ENCODE measurements at regions of chr3 and their contacts with region 1.

Region 1: DNA sequence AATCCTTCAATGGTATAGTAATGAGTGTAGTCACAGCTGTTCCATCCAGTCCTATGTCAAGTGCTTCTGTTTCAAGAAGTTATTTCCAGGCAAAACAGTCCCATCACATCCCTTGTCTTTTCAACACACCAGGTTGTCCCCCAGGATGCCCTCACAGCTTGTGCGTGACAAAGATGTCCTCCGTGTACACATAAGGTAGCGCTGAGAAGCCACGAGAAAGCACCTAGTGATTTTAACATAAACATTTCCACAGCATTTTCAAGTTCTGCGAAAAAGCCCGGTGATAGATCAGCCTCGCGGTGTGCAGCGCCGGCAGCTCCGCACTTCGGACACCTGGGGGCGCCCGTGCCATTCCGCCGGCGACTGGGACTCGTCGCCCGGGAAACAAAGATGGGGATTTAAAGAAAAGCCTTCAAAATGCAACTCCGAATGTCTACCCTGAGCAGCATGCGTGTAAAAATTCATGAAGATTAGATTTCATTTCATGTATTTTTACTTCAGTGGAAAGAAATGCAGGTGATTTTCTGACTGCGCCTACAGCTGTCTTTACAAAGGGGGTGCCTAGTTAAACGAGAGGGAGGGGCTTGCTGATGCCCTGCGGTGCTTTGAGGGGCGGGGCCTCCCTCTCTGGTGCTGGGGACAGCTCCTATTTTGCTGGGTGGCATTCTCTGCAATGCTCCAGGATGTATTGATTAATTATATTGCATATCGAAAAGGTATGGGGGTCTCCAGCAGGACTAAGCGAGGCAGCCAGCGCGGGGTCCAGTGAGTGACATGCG is 49.9 kb downstream of the KY start:
- DNase-seq: peak in 1 of 2 experiments; percentile 89
- H3K4me3 ChIP-seq: peak overlapping the region in 3 of 4 experiments; percentile 19 to 53 (median 27); a peak in 5 of 8 replicates
- H3K27ac ChIP-seq: no peak overlapping the region
- H3K4me1 ChIP-seq: peaks cover 0 to 10% (median 2%) of the 10 kb centered on the region in 4 experiments; a peak in 3 of 7 replicates
- H3K27me3 ChIP-seq: peaks cover 0 to 5% (median 2%) of the 10 kb centered on the region in 4 experiments; a peak in 2 of 7 replicates
- CTCF ChIP-seq: peak in 2 of 3 experiments; percentile 86 to 93; a peak in 3 of 4 replicates
- EP300 ChIP-seq: no peak
- POLR2A ChIP-seq: no peak
- RAD21 ChIP-seq: peak; percentile 96 to 97

Region 2: DNA sequence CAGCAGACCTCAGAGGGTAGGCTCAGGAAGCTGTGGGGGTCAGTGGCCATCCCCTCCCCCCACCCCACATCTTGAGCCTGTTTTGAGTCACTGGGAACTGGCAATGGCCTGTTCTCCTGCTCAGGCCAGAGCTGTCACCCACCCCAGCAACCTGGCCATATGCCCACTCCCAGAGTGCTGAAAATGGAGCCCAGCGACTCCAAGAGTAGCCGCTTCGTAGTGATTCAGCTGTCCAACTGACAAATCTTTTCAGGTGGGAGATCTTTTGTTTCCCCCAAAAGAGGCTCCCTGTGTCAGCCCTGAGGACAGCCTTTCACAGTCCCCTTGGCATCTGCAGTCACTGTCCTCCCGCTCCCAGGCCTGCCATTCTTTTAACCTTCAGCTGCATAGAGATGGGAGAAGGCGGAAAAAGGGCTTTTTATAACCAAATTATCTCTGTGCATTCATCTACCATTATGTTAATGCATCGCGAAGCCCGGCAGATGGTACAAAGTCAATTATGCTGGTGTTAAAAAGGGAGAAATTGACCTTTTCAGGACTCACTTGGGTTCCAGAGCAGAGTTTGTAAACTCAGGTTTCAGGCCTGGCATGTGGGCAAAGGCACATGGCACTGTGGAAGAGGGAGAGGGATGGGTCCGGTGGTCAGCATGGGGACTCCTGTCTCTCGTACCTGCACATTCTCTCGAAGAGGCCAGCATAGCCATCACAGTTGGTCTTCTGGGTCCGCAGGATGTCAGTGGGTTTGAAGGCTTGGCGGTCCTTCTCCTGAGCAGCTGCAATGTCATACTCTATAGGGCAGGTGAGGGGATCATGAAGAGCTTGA is 17.8 kb after region 1 on chr3:
- CTCF ChIA-PET with region 1: interaction called, 25 read pairs
- POLR2A ChIA-PET with region 1: interaction called, 3 read pairs
- DNase-seq: peak in 1 of 2 experiments; percentile 33
- H3K4me3 ChIP-seq: no peak overlapping the region
- H3K27ac ChIP-seq: no peak overlapping the region
- H3K4me1 ChIP-seq: peaks cover 0 to 3% (median 0%) of the 10 kb centered on the region in 4 experiments; a peak in 1 of 7 replicates
- H3K27me3 ChIP-seq: no peaks in the 10 kb centered on the region
- CTCF ChIP-seq: no peak
- EP300 ChIP-seq: no peak
- POLR2A ChIP-seq: no peak
- RAD21 ChIP-seq: no peak

Region 3: GRCh38 chr3:134640872-134641470 is 40.1 kb after region 1 on chr3:
- CTCF ChIA-PET with region 1: interaction called, 197 read pairs
- POLR2A ChIA-PET with region 1: interaction called, 5 read pairs
- DNase-seq: peak in 1 of 2 experiments; percentile 57
- H3K4me3 ChIP-seq: no peak overlapping the region
- H3K27ac ChIP-seq: no peak overlapping the region
- H3K4me1 ChIP-seq: peaks cover 0 to 11% (median 5%) of the 10 kb centered on the region in 4 experiments; a peak in 3 of 7 replicates
- H3K27me3 ChIP-seq: peaks cover 0 to 5% (median 3%) of the 10 kb centered on the region in 4 experiments; a peak in 4 of 7 replicates
- CTCF ChIP-seq: peak; percentile 73 to 77 (median 73)
- EP300 ChIP-seq: no peak
- POLR2A ChIP-seq: no peak
- RAD21 ChIP-seq: peak; percentile 53 to 62

Region 4: DNA sequence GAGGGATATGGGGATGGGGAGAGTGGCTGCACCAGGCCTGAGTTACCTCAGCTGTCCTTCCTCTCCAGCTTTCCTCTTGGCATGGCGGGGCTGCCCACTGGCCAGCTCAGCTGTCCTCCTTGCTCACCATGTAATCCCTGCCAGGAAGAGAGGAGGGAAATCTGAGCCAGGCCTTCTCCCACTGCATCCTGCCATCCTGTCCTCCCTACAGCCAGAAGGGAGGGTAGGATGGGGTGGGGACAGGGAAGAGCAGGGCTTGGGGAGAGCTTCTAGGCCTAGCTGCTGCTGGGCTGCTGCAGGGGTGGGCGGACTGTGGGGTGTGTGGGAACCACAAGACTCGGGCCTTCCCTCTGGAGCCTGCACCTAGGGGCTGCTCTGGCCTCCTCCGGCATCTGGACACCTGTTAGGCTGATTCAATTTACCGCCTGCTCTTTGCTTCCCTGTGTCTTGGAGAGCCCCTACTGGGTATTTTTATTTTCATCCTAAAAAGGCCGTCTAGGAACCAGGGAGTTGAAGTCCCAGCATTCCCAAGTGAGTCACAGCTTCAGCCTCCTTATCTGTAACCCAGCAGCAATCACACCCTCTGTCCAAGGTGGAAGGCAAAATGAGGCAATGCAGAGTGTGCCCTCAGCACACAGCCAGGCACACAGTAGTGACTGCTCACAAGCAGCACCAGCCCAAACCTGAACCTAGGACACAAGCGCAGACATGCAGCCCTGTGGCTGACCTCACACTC is 63.0 kb after region 1 on chr3:
- CTCF ChIA-PET with region 1: interaction called, 19 read pairs
- POLR2A ChIA-PET with region 1: no interaction called
- DNase-seq: no peak
- H3K4me3 ChIP-seq: no peak overlapping the region
- H3K27ac ChIP-seq: no peak overlapping the region
- H3K4me1 ChIP-seq: peaks cover 0 to 5% (median 3%) of the 10 kb centered on the region in 4 experiments; a peak in 3 of 7 replicates
- H3K27me3 ChIP-seq: peaks cover 0 to 2% (median 0%) of the 10 kb centered on the region in 4 experiments; a peak in 2 of 7 replicates
- CTCF ChIP-seq: no peak
- EP300 ChIP-seq: no peak
- POLR2A ChIP-seq: no peak
- RAD21 ChIP-seq: no peak

Region 5: GRCh38 chr3:134685929-134686802 is 85.3 kb after region 1 on chr3:
- CTCF ChIA-PET with region 1: interaction called, 13 read pairs
- POLR2A ChIA-PET with region 1: no interaction called
- DNase-seq: no peak
- H3K4me3 ChIP-seq: no peak overlapping the region
- H3K27ac ChIP-seq: no peak overlapping the region
- H3K4me1 ChIP-seq: no peaks in the 10 kb centered on the region
- H3K27me3 ChIP-seq: peaks cover 0 to 3% (median 0%) of the 10 kb centered on the region in 4 experiments; a peak in 1 of 7 replicates
- CTCF ChIP-seq: no peak
- EP300 ChIP-seq: no peak
- POLR2A ChIP-seq: no peak
- RAD21 ChIP-seq: no peak